ENCODE measurements at regions of chr12 and their contacts with region 1.

Region 1: DNA sequence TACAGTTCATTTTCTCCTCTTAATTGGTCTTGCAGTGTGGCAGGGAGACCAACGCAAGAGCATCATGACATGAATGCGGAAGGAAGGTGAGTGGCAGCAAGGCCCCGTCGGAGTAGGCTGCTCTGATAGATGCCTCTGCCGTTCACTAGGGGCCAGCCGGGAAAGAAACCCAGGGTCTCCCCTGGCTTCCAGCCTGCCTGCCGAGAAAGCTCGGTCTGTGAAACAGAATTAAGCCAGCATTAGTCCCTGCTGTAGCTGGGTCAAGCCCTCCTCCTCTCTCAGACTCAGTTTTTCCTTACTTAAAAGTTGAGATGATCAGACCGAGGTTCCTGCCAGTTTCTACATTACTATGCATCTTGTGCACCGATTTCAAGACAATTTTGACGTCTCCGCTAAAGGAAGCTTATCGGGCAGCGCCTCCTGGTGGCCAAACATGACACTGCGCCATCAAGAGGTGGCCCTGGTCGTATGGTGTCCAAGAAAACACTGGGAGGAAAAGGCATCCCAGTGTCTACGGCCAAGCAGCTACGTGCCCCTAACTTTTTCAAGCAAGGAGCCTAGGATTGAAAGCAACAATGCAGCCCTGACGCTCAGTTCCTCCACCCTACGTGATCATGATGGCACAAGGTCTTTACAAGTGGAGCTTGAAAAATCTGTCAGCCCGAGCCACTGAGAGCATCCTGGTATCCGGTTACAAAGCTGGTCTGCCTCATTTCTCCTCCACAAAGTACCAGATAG is 131.6 kb downstream of the KSR2 start:
- DNase-seq: no peak
- ATAC-seq: peak; percentile 84
- H3K4me3 ChIP-seq: no peak overlapping the region
- H3K27ac ChIP-seq: no peak overlapping the region
- H3K4me1 ChIP-seq: peaks cover 4% of the 10 kb centered on the region; the same call in 1 of the 2 replicates
- H3K27me3 ChIP-seq: peaks cover 15% of the 10 kb centered on the region
- CTCF ChIP-seq: peak; percentile 98

Region 2: GRCh38 chr12:117212563-117213190 is 624.5 kb before region 1 on chr12:
- CTCF ChIA-PET with region 1: interaction called, 5 read pairs
- POLR2A ChIA-PET with region 1: no interaction called
- in situ Hi-C with region 1: no loop called
- intact Hi-C with region 1: loop called (anchors 1 kb)
- DNase-seq: peak; percentile 61
- ATAC-seq: peak; percentile 93
- H3K4me3 ChIP-seq: no peak overlapping the region
- H3K27ac ChIP-seq: no peak overlapping the region
- H3K4me1 ChIP-seq: no peaks in the 10 kb centered on the region
- H3K27me3 ChIP-seq: peaks cover 3% of the 10 kb centered on the region; the same call in 1 of the 2 replicates
- CTCF ChIP-seq: peak; percentile 92

Region 3: GRCh38 chr12:117236456-117237001 is 600.6 kb before region 1 on chr12:
- CTCF ChIA-PET with region 1: no interaction called
- POLR2A ChIA-PET with region 1: no interaction called
- in situ Hi-C with region 1: loop called (anchors 25 kb)
- intact Hi-C with region 1: loop called (anchors 5 kb)
- DNase-seq: peak; percentile 48
- ATAC-seq: peak; percentile 93
- H3K4me3 ChIP-seq: no peak overlapping the region
- H3K27ac ChIP-seq: no peak overlapping the region
- H3K4me1 ChIP-seq: no peaks in the 10 kb centered on the region
- H3K27me3 ChIP-seq: peaks cover 5% of the 10 kb centered on the region; the same call in 1 of the 2 replicates
- CTCF ChIP-seq: peak; percentile 91

Region 4: GRCh38 chr12:117309287-117309925 is 527.8 kb before region 1 on chr12:
- CTCF ChIA-PET with region 1: no interaction called
- POLR2A ChIA-PET with region 1: interaction called, 11 read pairs
- in situ Hi-C with region 1: no loop called
- intact Hi-C with region 1: no loop called
- DNase-seq: no peak
- ATAC-seq: no peak
- H3K4me3 ChIP-seq: no peak overlapping the region
- H3K27ac ChIP-seq: no peak overlapping the region
- H3K4me1 ChIP-seq: no peaks in the 10 kb centered on the region
- H3K27me3 ChIP-seq: no peaks in the 10 kb centered on the region
- CTCF ChIP-seq: no peak

Region 5: DNA sequence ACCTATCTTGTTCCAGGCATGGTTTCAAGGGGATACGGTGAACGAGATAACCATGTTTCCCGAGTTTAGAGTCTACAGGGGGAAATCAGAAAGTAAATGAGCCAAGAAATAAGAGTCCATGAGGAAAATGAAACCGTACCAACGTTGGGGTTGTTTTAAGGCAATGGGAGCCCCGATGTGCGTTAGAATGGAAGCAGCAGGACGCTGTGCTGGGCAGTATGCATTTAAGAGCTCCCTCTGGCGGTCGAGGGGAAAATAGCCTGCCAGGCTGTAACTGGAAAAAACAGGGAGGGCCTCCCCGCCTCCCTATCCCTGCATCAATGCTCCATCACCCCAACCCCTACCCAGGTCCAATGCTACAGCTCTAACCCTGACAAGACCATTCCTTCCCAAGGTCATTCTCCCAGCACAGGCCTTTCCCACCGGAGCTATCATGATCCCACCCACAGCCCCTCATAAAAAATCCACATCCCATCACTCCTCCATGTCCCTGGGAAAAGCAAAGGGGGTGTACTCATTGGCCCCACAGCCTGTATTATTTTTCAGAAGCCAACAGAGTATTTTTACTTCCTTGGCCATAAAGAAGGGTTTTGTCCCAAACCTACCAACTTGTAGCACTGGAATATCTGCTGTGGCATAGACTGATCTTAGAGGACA is 249.4 kb before region 1 on chr12:
- CTCF ChIA-PET with region 1: no interaction called
- POLR2A ChIA-PET with region 1: no interaction called
- in situ Hi-C with region 1: no loop called
- intact Hi-C with region 1: loop called (anchors 5 kb)
- DNase-seq: peak; percentile 39
- ATAC-seq: peak; percentile 95
- H3K4me3 ChIP-seq: no peak overlapping the region
- H3K27ac ChIP-seq: no peak overlapping the region
- H3K4me1 ChIP-seq: no peaks in the 10 kb centered on the region; the same call in 1 of the 2 replicates
- H3K27me3 ChIP-seq: peaks cover 4% of the 10 kb centered on the region
- CTCF ChIP-seq: peak; percentile 94

Region 6: GRCh38 chr12:117671734-117672133 is 165.4 kb before region 1 on chr12:
- CTCF ChIA-PET with region 1: interaction called, 3 read pairs
- POLR2A ChIA-PET with region 1: no interaction called
- in situ Hi-C with region 1: no loop called
- intact Hi-C with region 1: loop called (anchors 5 kb)
- DNase-seq: no peak
- ATAC-seq: no peak; the same call in 1 of the 2 replicates
- H3K4me3 ChIP-seq: no peak overlapping the region
- H3K27ac ChIP-seq: no peak overlapping the region
- H3K4me1 ChIP-seq: no peaks in the 10 kb centered on the region
- H3K27me3 ChIP-seq: peaks cover 2% of the 10 kb centered on the region; the same call in 1 of the 2 replicates
- CTCF ChIP-seq: peak; percentile 84

Region 7: GRCh38 chr12:117874842-117875434 is 37.8 kb after region 1 on chr12:
- CTCF ChIA-PET with region 1: no interaction called
- POLR2A ChIA-PET with region 1: no interaction called
- in situ Hi-C with region 1: no loop called
- intact Hi-C with region 1: no loop called
- DNase-seq: no peak
- ATAC-seq: peak; percentile 88
- H3K4me3 ChIP-seq: no peak overlapping the region
- H3K27ac ChIP-seq: no peak overlapping the region
- H3K4me1 ChIP-seq: 0 out of 2 replicates have a peak, but pooled peaks cover 2% of the 10 kb centered on the region
- H3K27me3 ChIP-seq: no peaks in the 10 kb centered on the region
- CTCF ChIP-seq: peak; percentile 95